Activated T-helper 2 cell treated with anti-CD3 and anti-CD28 coated beads, Interferon-gamma antibody, Interleukin-2, Interleukin-4, amounts not matched to agents 10 μg/mL and 5 μg/mL and 100 μg/mL, durations not matched to agents 14 hours and 24 hours and 36 hours (primary cell): ENCODE measurements at regions of chr6 and their contacts with region 1.

Region 1: GRCh38 chr6:134640975-134641429 is 308.9 kb downstream of the ALDH8A1 start:
- DNase-seq: peak; percentile 64
- H3K4me3 Mint-ChIP-seq: no peak overlapping the region
- H3K27ac Mint-ChIP-seq: no peak overlapping the region
- H3K4me1 Mint-ChIP-seq: peaks cover 38% of the 10 kb centered on the region
- H3K27me3 Mint-ChIP-seq: peaks cover 7% of the 10 kb centered on the region

Region 2: DNA sequence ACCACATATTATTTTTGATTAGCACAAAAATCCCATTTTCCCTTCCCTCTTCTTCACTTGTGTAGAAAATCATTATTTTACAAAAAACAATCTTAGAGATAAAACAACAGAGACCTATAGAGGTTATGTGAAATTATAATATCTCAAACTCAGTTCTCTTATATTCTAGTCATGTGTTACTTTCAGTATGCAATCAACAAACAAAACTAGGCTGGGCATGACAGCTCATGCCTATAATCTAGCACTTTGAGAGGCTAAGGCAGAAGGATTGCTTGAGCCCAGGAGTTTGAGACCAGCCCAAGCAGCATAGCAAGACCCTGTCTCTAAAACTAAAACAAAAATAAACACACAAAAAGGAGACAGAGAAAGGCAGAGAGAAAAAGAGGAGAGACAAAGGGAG is 111.7 kb before region 1 on chr6:
- intact Hi-C with region 1: no loop called
- DNase-seq: no peak
- H3K4me3 Mint-ChIP-seq: no peak overlapping the region
- H3K27ac Mint-ChIP-seq: peak overlapping the region; percentile 51
- H3K4me1 Mint-ChIP-seq: peaks cover 49% of the 10 kb centered on the region
- H3K27me3 Mint-ChIP-seq: no peaks in the 10 kb centered on the region

Region 3: DNA sequence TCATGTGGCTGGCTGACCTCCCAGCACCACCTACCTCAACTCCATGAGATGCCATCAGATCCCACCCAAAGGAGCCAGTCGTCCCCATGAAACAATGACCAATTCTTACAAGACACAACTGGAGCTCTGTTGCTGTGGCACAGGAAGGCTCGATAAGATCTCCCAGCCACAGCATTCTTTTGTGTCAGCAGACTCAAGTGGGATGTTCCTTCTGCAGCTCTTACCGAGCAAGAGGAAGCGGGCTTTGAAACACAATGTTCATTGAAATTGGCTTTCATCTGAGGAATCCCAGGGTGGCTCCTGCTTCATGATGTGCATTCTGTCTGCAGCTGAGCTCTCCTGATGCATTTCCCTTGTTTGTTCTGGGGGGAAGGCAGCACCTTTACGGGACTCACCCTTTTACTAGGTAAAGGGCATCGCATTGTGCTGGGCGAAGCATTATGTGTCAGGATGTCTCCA is 101.1 kb before region 1 on chr6:
- intact Hi-C with region 1: loop called (anchors 5 kb)
- DNase-seq: peak; percentile 19
- H3K4me3 Mint-ChIP-seq: peak overlapping the region; percentile 65
- H3K27ac Mint-ChIP-seq: peak overlapping the region; percentile 23
- H3K4me1 Mint-ChIP-seq: peaks cover 36% of the 10 kb centered on the region
- H3K27me3 Mint-ChIP-seq: no peaks in the 10 kb centered on the region

Region 4: GRCh38 chr6:134564705-134565104 is 76.3 kb before region 1 on chr6:
- intact Hi-C with region 1: no loop called
- DNase-seq: no peak
- H3K4me3 Mint-ChIP-seq: no peak overlapping the region
- H3K27ac Mint-ChIP-seq: no peak overlapping the region
- H3K4me1 Mint-ChIP-seq: peaks cover 16% of the 10 kb centered on the region
- H3K27me3 Mint-ChIP-seq: no peaks in the 10 kb centered on the region

Region 5: GRCh38 chr6:134609716-134610261 is 31.2 kb before region 1 on chr6:
- intact Hi-C with region 1: no loop called
- DNase-seq: no peak
- H3K4me3 Mint-ChIP-seq: no peak overlapping the region
- H3K27ac Mint-ChIP-seq: no peak overlapping the region
- H3K4me1 Mint-ChIP-seq: no peaks in the 10 kb centered on the region
- H3K27me3 Mint-ChIP-seq: no peaks in the 10 kb centered on the region

Region 6: GRCh38 chr6:134657751-134658522 is 16.9 kb after region 1 on chr6:
- intact Hi-C with region 1: no loop called
- DNase-seq: no peak
- H3K4me3 Mint-ChIP-seq: no peak overlapping the region
- H3K27ac Mint-ChIP-seq: no peak overlapping the region
- H3K4me1 Mint-ChIP-seq: no peaks in the 10 kb centered on the region
- H3K27me3 Mint-ChIP-seq: peaks cover 15% of the 10 kb centered on the region

Region 7: GRCh38 chr6:134822920-134823709 is 182.1 kb after region 1 on chr6:
- intact Hi-C with region 1: loop called (anchors 2 kb)
- DNase-seq: no peak
- H3K4me3 Mint-ChIP-seq: no peak overlapping the region
- H3K27ac Mint-ChIP-seq: no peak overlapping the region
- H3K4me1 Mint-ChIP-seq: no peaks in the 10 kb centered on the region
- H3K27me3 Mint-ChIP-seq: no peaks in the 10 kb centered on the region

Region 8: DNA sequence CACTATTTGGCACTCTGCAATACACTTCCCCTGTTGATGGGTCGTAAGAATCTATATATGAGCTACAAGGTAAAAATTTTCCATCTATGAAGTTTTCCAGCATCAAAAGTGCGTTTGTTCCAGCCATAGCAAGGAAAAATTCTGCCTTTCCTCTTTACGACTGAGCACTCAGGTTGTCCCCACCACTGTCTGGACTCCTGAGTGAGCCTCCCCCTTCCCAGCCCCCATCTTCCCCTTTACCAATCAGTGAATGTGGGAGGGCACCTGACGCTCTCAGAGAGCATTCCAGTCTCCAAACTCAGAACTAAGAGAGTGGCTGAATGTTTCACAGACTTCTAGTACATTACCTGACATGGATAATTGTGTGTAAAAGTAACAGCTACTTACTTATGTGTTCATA is 308.9 kb after region 1 on chr6 and contains the start of gene ALDH8A1:
- intact Hi-C with region 1: loop called (anchors 10 kb)
- DNase-seq: no peak
- H3K4me3 Mint-ChIP-seq: no peak within 1 kb of the TSS
- H3K27ac Mint-ChIP-seq: no peak within 1 kb of the TSS
- H3K4me1 Mint-ChIP-seq: no peaks in the 10 kb centered on the region
- H3K27me3 Mint-ChIP-seq: no peaks in the 10 kb centered on the region
- total RNA-seq, gene ALDH8A1: 1.1 and 1.2 TPM in 2 replicates